Esophagus muscularis mucosa (tissue), 4 donors: ENCODE measurements at regions of chr20 and their contacts with region 1.

Region 1: DNA sequence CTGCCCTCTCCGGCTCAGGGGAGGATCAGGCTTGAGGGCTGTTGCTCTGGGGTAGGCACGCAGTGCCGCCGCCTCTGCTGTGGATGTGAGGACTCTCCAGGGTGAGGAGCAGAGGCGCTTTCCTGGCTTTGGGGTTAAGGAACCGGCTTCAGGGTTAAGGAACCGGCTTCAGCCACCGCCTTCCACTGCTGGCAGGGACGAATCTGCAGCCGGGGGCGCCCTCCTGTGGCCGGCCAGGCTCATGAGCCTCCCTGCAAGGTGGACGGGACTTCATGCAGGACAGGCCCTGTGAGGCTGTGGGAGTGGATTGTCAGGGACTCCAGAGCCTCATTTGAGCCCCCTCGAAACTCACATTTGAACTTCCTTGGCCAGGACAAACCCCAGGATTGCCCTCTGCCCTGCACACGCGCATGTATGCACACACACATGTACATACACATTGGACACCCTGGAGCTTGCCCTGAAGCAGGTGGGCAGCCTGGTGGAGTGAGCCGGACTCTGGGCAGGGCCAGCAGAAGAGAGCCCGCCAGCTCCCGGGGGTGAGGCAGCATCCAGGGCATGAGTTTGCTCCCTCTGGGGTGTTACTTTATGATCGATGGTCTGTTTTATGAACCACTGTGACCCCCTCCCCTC is 146.8 kb downstream of the PHACTR3 start:
- DNase-seq: no peak
- H3K4me3 ChIP-seq: no peak overlapping the region
- H3K27ac ChIP-seq: no peak overlapping the region
- H3K4me1 ChIP-seq: peaks cover 37 to 51% (median 43%) of the 10 kb centered on the region in 4 donors
- H3K27me3 ChIP-seq: peaks cover 0 to 36% (median 0%) of the 10 kb centered on the region in 4 donors
- CTCF ChIP-seq: peak; percentile 59 to 79 (median 73)
- EP300 ChIP-seq: no peak
- POLR2A ChIP-seq: no peak

Region 2: DNA sequence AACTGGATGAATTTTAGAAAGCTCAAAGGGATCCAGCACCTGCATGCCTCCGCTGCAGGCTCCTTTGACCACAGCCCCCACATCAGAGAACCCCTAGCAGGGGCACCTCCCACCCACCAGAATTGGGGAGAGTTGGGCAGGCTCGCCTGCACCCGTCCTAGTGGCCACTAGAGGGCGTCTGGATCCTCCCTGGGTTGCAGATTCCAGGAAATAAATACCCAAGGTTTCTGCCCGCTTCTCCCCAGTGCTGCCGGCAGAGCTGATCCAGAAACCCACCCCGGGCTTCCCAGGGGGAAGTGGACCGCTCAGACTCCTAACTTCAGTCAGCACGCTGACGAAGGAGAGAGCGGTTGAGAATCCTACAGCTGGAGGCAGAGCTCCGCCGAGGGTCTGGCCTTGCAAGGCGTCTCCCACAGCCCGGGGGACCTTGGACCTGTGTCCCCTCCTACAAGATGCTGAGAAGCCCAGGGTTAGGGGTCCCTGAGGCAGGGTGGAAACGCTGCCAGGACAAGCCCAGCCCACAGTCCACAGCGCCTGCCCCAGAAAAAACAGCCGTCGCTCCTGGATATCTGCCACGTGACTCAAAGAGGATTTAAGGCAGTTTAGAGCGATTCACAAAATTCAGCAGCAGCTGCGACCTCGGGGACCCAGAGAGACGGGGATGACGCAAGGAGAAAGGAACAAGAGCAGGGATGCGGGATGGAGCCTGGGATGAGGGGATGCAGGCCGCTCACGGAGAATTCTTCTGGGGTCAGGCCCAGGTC is 179.4 kb before region 1 on chr20:
- intact Hi-C with region 1: loop called (anchors 2 kb)
- DNase-seq: no peak
- H3K4me3 ChIP-seq: peak overlapping the region; percentile 44 to 52 (median 46)
- H3K27ac ChIP-seq: peak overlapping the region in 3 of 4 donors; percentile 38 to 55 (median 42)
- H3K4me1 ChIP-seq: peaks cover 0 to 15% (median 7%) of the 10 kb centered on the region in 4 donors
- H3K27me3 ChIP-seq: peaks cover 0 to 85% (median 9%) of the 10 kb centered on the region in 4 donors
- CTCF ChIP-seq: peak in 2 of 3 experiments; percentile 79 to 86
- EP300 ChIP-seq: no peak
- POLR2A ChIP-seq: no peak

Region 3: GRCh38 chr20:59598625-59599310 is 152.4 kb before region 1 on chr20:
- intact Hi-C with region 1: loop called (anchors 2 kb)
- DNase-seq: no peak
- H3K4me3 ChIP-seq: no peak overlapping the region
- H3K27ac ChIP-seq: no peak overlapping the region
- H3K4me1 ChIP-seq: peaks cover 0 to 2% (median 0%) of the 10 kb centered on the region in 4 donors
- H3K27me3 ChIP-seq: peaks cover 0 to 60% (median 13%) of the 10 kb centered on the region in 4 donors
- CTCF ChIP-seq: peak; percentile 62 to 73 (median 67)
- EP300 ChIP-seq: no peak
- POLR2A ChIP-seq: no peak

Region 4: GRCh38 chr20:59678288-59678687 is 72.9 kb before region 1 on chr20:
- intact Hi-C with region 1: no loop called
- DNase-seq: no peak
- H3K4me3 ChIP-seq: no peak overlapping the region
- H3K27ac ChIP-seq: no peak overlapping the region
- H3K4me1 ChIP-seq: peaks cover 0 to 10% (median 0%) of the 10 kb centered on the region in 4 donors
- H3K27me3 ChIP-seq: peaks cover 0 to 89% (median 2%) of the 10 kb centered on the region in 4 donors
- CTCF ChIP-seq: no peak
- EP300 ChIP-seq: no peak
- POLR2A ChIP-seq: no peak

Region 5: GRCh38 chr20:59903621-59904020 is 152.4 kb after region 1 on chr20:
- intact Hi-C with region 1: no loop called
- DNase-seq: no peak
- H3K4me3 ChIP-seq: no peak overlapping the region
- H3K27ac ChIP-seq: no peak overlapping the region
- H3K4me1 ChIP-seq: no peaks in the 10 kb centered on the region
- H3K27me3 ChIP-seq: peaks cover 0 to 2% (median 0%) of the 10 kb centered on the region in 4 donors
- CTCF ChIP-seq: no peak
- EP300 ChIP-seq: no peak
- POLR2A ChIP-seq: no peak